Right ventricle myocardium superior (tissue), 1 donor: ENCODE measurements at regions of chr12 and their contacts with region 1.

Region 1: GRCh38 chr12:1972856-1973317 is 31.4 kb downstream of the DCP1B start:
- DNase-seq: peak; percentile 67
- ATAC-seq: peak; percentile 63

Region 2: GRCh38 chr12:2034633-2035430 is 61.9 kb after region 1 on chr12:
- intact Hi-C with region 1: loop called (anchors 5 kb)
- DNase-seq: peak; percentile 93
- ATAC-seq: peak; percentile 80

Region 3: GRCh38 chr12:2051700-2052621 is 79.1 kb after region 1 on chr12:
- intact Hi-C with region 1: no loop called
- DNase-seq: no peak
- ATAC-seq: peak; percentile 8

Region 4: GRCh38 chr12:2183556-2184541 is 211.0 kb after region 1 on chr12:
- intact Hi-C with region 1: no loop called
- DNase-seq: no peak
- ATAC-seq: no peak